Prostate gland (tissue), 2 donors: ENCODE measurements at regions of chr1 and their contacts with region 1.

Region 1: GRCh38 chr1:18902523-18903290 is at the start of gene ALDH4A1:
- DNase-seq: peak; percentile 99
- H3K4me3 ChIP-seq: peak within 1 kb of the TSS; percentile 71 to 78
- H3K27ac ChIP-seq: peak within 1 kb of the TSS; percentile 84 to 94
- H3K4me1 ChIP-seq: peaks cover 24% of the 10 kb centered on the region
- H3K27me3 ChIP-seq: no peaks in the 10 kb centered on the region
- CTCF ChIP-seq: peak in 2 of 4 experiments; percentile 12 to 19
- POLR2A ChIP-seq: peak; percentile 75
- total RNA-seq, gene ALDH4A1: 15.7 to 58.4 TPM

Region 2: DNA sequence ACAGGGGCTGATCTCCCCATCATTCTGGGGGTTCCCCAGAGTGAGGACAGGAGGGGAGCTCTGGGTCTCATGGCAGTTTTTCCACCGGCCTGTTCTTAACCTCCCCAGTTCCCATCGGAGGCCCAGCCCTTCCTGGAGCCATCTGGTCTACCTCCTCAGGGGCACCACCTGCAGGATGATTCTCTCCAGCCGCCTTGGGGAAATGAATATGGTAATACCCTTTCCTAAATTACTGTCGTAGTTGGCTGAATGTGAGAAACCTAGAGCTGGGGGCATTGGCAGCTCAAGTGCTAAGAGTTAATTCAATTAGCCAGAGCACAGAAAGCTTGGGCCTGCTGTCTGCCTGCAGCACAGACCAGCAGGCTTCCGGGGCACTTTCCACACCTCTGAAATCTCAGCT is 108.1 kb before region 1 on chr1:
- intact Hi-C with region 1: no loop called
- DNase-seq: no peak
- H3K4me3 ChIP-seq: no peak overlapping the region
- H3K27ac ChIP-seq: no peak overlapping the region
- H3K4me1 ChIP-seq: no peaks in the 10 kb centered on the region
- H3K27me3 ChIP-seq: peaks cover 5% of the 10 kb centered on the region
- CTCF ChIP-seq: no peak
- POLR2A ChIP-seq: no peak

Region 3: GRCh38 chr1:18956369-18957135 is 53.8 kb after region 1 on chr1 and contains the start of gene IFFO2:
- intact Hi-C with region 1: loop called (anchors 10 kb)
- DNase-seq: peak; percentile 98
- H3K4me3 ChIP-seq: peak within 1 kb of the TSS; percentile 73 to 76
- H3K27ac ChIP-seq: peak within 1 kb of the TSS; percentile 77 to 78
- H3K4me1 ChIP-seq: peaks cover 12% of the 10 kb centered on the region
- H3K27me3 ChIP-seq: no peaks in the 10 kb centered on the region
- CTCF ChIP-seq: no peak
- POLR2A ChIP-seq: peak; percentile 97
- total RNA-seq, gene IFFO2: 13.6 to 20.4 TPM

Region 4: GRCh38 chr1:19096036-19096833 is 193.5 kb after region 1 on chr1:
- intact Hi-C with region 1: loop called (anchors 2 kb)
- DNase-seq: peak; percentile 77
- H3K4me3 ChIP-seq: no peak overlapping the region
- H3K27ac ChIP-seq: no peak overlapping the region
- H3K4me1 ChIP-seq: no peaks in the 10 kb centered on the region
- H3K27me3 ChIP-seq: no peaks in the 10 kb centered on the region
- CTCF ChIP-seq: peak; percentile 29 to 86 (median 68)
- POLR2A ChIP-seq: no peak

Region 5: GRCh38 chr1:19232526-19232851 is 329.8 kb after region 1 on chr1:
- intact Hi-C with region 1: loop called (anchors 10 kb)
- DNase-seq: peak; percentile 40
- H3K4me3 ChIP-seq: no peak overlapping the region
- H3K27ac ChIP-seq: peak overlapping the region; percentile 46 to 51
- H3K4me1 ChIP-seq: peaks cover 7% of the 10 kb centered on the region
- H3K27me3 ChIP-seq: no peaks in the 10 kb centered on the region
- CTCF ChIP-seq: peak in 2 of 4 experiments; percentile 14 to 27
- POLR2A ChIP-seq: no peak